Activated CD4-positive, alpha-beta T cell treated with anti-CD3 and anti-CD28 coated beads, Interleukin-2, amount 10 ng/mL, durations not matched to agents 24 days and 14 days (primary cell): ENCODE measurements at regions of chr3 and their contacts with region 1.

Region 1: DNA sequence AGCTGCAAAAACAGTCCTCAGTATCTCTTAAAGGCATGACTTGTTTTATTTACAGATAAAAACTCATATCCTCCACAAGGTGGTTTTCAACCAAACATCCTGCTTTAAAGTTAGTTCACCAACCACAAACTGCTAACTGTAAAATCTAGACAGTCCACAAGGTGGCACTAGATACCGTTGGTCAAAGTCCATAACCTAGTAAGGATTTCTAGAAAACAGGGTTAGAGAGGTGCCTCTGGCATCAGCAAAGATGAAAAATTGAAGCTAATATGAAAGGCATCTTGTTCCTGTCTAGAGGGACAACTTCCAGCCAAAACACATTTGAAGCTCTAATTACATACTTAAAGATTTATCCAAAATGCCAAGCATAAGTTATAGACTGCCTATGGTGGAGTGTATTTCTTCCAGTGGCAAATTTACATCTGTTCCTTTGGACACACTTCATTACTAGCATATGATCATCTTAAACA is 56.0 kb downstream of the ZMAT3 start:
- DNase-seq: peak; percentile 94
- H3K4me3 Mint-ChIP-seq: no peak overlapping the region
- H3K27ac Mint-ChIP-seq: peak overlapping the region; percentile 5
- H3K4me1 Mint-ChIP-seq: peaks cover 28% of the 10 kb centered on the region
- H3K27me3 Mint-ChIP-seq: peaks cover 14% of the 10 kb centered on the region

Region 2: DNA sequence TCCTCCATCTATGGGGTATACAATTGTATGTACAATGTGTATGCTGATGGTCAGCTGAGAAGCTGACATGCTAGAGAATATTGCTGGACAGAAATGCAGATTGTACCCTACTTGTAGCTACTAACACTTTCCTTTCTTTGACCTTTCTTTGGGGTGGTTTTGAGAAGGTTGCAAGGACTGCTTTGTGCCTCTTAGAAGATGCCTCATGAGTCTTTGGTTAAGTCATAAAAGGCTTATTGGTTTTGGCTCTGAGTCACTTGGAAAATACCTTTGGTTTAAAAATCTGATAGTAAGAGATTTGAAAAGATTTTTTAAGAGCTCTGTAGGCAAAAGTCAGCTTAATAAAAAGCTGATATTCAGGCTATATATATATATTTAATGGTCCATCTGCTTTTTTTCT is 15.4 kb before region 1 on chr3:
- intact Hi-C with region 1: loop called (anchors 2 kb)
- DNase-seq: no peak
- H3K4me3 Mint-ChIP-seq: no peak overlapping the region
- H3K27ac Mint-ChIP-seq: peak overlapping the region; percentile 43
- H3K4me1 Mint-ChIP-seq: peaks cover 9% of the 10 kb centered on the region
- H3K27me3 Mint-ChIP-seq: peaks cover 8% of the 10 kb centered on the region

Region 3: GRCh38 chr3:179037351-179037750 is 21.8 kb after region 1 on chr3:
- intact Hi-C with region 1: loop called (anchors 2 kb)
- DNase-seq: peak; percentile 88
- H3K4me3 Mint-ChIP-seq: peak overlapping the region; percentile 65
- H3K27ac Mint-ChIP-seq: peak overlapping the region; percentile 59
- H3K4me1 Mint-ChIP-seq: peaks cover 15% of the 10 kb centered on the region
- H3K27me3 Mint-ChIP-seq: no peaks in the 10 kb centered on the region

Region 4: GRCh38 chr3:179071550-179072397 is 56.2 kb after region 1 on chr3 and contains the start of gene ZMAT3:
- intact Hi-C with region 1: loop called (anchors 1 kb)
- DNase-seq: peak; percentile 96
- H3K4me3 Mint-ChIP-seq: peak within 1 kb of the TSS; percentile 99
- H3K27ac Mint-ChIP-seq: peak within 1 kb of the TSS; percentile 96
- H3K4me1 Mint-ChIP-seq: peaks cover 35% of the 10 kb centered on the region
- H3K27me3 Mint-ChIP-seq: no peaks in the 10 kb centered on the region
- total RNA-seq, gene ZMAT3: 11.8 and 13.1 TPM in 2 replicates

Region 5: DNA sequence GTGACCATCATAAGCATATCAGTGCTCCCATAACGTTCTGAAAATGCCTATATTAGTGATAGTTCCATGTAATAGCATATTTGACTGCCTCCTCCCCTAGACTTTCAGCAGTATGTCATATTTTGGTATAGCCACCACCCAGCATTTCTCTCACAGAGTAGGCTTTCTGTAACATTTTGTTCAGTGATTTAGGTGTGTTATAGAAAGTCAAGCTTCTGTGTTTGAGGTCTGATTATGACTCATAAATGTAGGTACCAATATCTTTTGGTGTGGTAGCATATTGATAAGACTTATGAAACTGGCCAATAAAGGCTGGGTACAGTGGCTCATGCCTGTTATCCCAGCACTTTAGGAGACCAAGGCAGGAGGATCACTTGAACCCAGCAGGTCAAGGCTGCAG is 90.3 kb after region 1 on chr3:
- intact Hi-C with region 1: loop called (anchors 1 kb)
- DNase-seq: no peak
- H3K4me3 Mint-ChIP-seq: no peak overlapping the region
- H3K27ac Mint-ChIP-seq: no peak overlapping the region
- H3K4me1 Mint-ChIP-seq: peaks cover 3% of the 10 kb centered on the region
- H3K27me3 Mint-ChIP-seq: peaks cover 10% of the 10 kb centered on the region

Region 6: DNA sequence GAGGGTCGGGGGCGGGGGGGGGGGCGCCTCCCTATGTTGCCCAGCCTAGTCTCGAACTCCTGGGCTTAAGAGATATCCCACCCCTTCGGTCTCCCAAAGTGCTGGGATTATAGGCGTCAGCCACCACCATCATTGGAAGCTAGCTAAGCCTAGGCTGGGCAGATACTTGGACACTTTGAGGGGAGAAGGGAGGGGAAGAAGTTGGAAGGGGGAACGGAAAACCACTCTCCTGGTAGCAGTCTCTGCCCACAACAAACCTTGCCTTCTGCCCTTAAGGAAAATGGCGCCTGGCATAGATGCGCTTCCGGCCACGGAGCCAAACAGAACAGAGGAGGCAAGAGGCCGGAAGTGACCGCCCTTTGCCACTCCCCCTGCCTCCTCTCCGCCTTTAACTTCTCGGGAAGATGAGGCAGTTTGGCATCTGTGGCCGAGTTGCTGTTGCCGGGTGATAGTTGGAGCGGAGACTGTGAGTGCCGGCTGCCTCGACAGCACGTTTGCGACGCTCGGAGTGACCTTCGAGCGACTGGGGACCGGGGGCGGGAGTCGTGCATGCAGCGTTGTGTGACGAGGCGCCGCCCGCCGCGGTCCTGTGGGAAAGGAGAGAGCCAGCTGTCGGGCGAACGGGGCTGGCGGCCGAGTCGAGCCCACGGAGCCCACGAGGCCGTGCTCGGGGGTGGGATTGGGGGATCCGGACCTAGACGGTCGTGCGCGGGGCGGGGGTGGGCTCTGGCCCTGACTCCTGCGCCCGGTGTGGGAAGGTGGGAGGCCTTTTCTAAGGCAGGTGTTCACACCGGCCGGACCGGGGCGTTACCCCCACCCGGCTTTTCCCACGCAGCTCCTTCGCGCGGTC is 332.0 kb after region 1 on chr3 and contains the start of gene MFN1:
- intact Hi-C with region 1: loop called (anchors 1 kb)
- DNase-seq: peak; percentile 97
- H3K4me3 Mint-ChIP-seq: peak within 1 kb of the TSS; percentile 100
- H3K27ac Mint-ChIP-seq: peak within 1 kb of the TSS; percentile 98
- H3K4me1 Mint-ChIP-seq: peaks cover 14% of the 10 kb centered on the region
- H3K27me3 Mint-ChIP-seq: no peaks in the 10 kb centered on the region
- total RNA-seq, gene MFN1: 36.2 and 37.0 TPM in 2 replicates

Region 7: DNA sequence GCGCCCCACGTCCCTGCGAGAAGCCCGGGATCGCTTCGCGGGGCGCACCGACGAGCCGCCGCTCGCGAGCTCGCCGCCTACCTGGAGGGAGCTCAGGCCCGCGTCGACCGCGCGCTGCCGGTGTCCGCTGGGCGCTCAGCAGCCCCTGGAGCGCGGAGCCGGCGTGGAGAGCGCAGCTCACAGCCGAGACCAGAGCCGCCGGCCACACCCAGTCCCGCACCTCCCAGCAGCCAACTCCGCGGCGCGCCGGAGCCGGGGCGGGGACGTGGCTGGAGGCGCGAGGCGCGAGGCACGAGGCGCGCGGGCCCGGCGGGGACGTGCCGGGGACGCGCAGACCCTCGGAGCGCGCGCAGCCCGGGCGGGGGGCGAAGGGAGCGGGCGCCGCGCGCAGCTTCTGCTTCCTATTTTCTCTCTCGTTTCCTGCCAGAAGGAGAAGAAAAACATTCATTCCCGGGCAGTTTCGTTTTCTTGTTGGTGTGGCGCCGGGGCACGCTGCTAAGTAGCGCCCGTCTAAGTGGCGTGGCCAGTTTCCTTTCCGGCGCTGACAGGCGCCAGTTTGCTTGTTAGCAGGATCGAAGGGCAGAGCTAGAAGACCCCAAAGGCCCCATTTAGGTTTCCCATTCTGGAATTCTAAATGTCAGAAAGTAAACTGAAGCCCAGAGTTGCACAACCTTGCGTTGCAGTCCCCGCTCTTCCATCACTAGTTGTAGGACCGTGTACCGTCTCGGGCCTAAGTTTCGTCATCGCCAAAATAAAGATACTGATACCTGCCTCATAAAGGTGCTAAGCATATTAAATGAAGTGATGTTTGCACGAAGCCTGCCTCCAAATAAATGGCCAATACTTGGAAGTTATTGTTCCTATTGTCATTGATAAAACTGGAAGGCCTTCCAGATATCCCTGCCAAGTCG is 435.9 kb after region 1 on chr3 and contains the start of gene GNB4:
- intact Hi-C with region 1: loop called (anchors 10 kb)
- DNase-seq: peak; percentile 90
- H3K4me3 Mint-ChIP-seq: peak within 1 kb of the TSS; percentile 85
- H3K27ac Mint-ChIP-seq: peak within 1 kb of the TSS; percentile 87
- H3K4me1 Mint-ChIP-seq: peaks cover 30% of the 10 kb centered on the region
- H3K27me3 Mint-ChIP-seq: peaks cover 68% of the 10 kb centered on the region
- total RNA-seq, gene GNB4: 11.8 and 14.0 TPM in 2 replicates